Activated CD4-positive, alpha-beta T cell treated with anti-CD3 and anti-CD28 coated beads, Interleukin-2, amount 10 ng/mL, durations not matched to agents 24 days and 14 days (primary cell): ENCODE measurements at regions of chr1 and their contacts with region 1.

Region 1: GRCh38 chr1:31548907-31549808 is 27.2 kb upstream of the TINAGL1 start:
- DNase-seq: peak; percentile 97
- H3K4me3 Mint-ChIP-seq: peak overlapping the region; percentile 69
- H3K27ac Mint-ChIP-seq: no peak overlapping the region
- H3K4me1 Mint-ChIP-seq: peaks cover 7% of the 10 kb centered on the region
- H3K27me3 Mint-ChIP-seq: peaks cover 10% of the 10 kb centered on the region

Region 2: GRCh38 chr1:31166462-31166861 is 382.7 kb before region 1 on chr1:
- intact Hi-C with region 1: loop called (anchors 1 kb)
- DNase-seq: no peak
- H3K4me3 Mint-ChIP-seq: no peak overlapping the region
- H3K27ac Mint-ChIP-seq: no peak overlapping the region
- H3K4me1 Mint-ChIP-seq: peaks cover 14% of the 10 kb centered on the region
- H3K27me3 Mint-ChIP-seq: peaks cover 4% of the 10 kb centered on the region

Region 3: GRCh38 chr1:31394628-31395193 is 154.4 kb before region 1 on chr1:
- intact Hi-C with region 1: loop called (anchors 1 kb)
- DNase-seq: peak; percentile 94
- H3K4me3 Mint-ChIP-seq: peak overlapping the region; percentile 84
- H3K27ac Mint-ChIP-seq: no peak overlapping the region
- H3K4me1 Mint-ChIP-seq: peaks cover 11% of the 10 kb centered on the region
- H3K27me3 Mint-ChIP-seq: peaks cover 10% of the 10 kb centered on the region

Region 4: DNA sequence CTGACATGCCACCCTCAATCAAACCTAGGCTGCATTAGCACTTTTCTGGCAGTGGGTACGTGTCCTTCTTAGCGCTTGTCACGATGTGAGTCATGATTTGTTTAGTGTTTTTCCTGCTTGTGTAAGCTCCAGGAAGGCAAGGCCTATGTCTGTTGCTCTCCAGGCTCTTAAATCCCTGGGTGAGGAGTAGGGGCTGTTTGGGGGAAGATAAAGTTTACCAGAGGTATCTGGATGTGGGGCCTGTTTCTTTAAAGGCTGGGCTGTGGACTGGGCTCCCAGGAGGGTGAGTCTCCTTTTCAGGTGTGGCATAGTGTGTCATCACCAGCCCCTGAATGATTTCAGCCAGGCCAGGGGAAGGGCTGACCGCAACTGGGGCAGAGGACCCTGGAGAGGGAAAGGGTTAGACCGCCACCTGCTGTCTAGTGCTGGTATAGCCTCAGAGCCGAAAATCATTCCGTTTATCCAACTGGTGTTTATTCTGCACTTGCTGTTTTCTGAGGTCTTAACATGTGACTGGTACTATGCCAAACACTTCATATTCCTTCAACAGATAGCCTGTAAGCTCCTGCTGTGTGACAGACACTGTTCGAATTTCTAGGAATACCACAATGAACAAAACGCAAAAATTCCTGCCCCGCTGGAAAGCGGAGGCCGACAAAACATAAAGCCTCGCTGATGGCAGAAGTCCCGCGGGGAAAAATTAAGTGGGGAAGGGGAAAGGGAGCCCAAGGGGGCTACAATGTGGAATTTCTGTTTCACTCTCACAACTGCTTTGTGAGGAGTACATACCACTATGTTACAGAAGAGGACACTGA is 126.4 kb before region 1 on chr1:
- intact Hi-C with region 1: loop called (anchors 10 kb)
- DNase-seq: peak; percentile 89
- H3K4me3 Mint-ChIP-seq: no peak overlapping the region
- H3K27ac Mint-ChIP-seq: no peak overlapping the region
- H3K4me1 Mint-ChIP-seq: no peaks in the 10 kb centered on the region
- H3K27me3 Mint-ChIP-seq: peaks cover 19% of the 10 kb centered on the region